MCF 10A (cell line): ENCODE measurements at regions of chr3 and their contacts with region 1.

Region 1: DNA sequence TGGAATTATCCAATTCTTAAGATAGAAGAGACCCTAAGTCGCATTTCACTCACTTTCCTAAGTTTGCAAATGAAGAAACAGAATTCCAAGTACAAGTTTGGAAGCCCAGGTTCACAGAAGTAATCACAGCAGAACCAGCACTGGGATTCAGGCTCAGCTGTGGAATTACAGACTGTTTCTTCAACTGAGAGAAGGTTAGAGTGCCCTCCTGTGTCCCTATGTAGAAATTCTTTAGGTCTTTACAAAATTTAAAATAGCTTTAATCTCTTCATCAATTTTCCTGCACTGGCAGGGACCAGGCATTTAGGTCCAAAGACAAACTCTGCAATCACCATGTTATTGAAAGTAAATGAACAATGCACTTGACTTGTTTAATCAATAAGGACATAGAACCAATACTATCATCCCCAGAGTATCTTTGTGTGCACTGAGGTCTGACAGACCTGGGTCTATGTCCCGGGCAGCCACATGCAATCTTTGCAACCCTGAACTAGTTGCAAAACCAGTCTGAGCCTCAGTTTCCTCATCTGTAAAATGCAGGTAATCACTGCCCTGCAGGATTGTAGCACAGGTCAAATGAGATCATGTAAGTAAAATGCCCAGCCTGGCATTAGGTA is 96.3 kb upstream of the ZBED2 start:
- DNase-seq: peak; percentile 51
- H3K4me3 Mint-ChIP-seq: no peak overlapping the region
- H3K27ac Mint-ChIP-seq: no peak overlapping the region
- H3K4me1 Mint-ChIP-seq: peaks cover 6% of the 10 kb centered on the region
- H3K27me3 Mint-ChIP-seq: no peaks in the 10 kb centered on the region
- CTCF ChIP-seq: peak; percentile 55

Region 2: GRCh38 chr3:111571907-111572460 is 119.4 kb before region 1 on chr3:
- CTCF ChIA-PET with region 1: interaction called, 193 read pairs
- POLR2A ChIA-PET with region 1: interaction called, 3 read pairs
- intact Hi-C with region 1: no loop called
- DNase-seq: no peak
- H3K4me3 Mint-ChIP-seq: no peak overlapping the region
- H3K27ac Mint-ChIP-seq: no peak overlapping the region
- H3K4me1 Mint-ChIP-seq: no peaks in the 10 kb centered on the region
- H3K27me3 Mint-ChIP-seq: no peaks in the 10 kb centered on the region
- CTCF ChIP-seq: no peak

Region 3: GRCh38 chr3:111616417-111617105 is 74.8 kb before region 1 on chr3:
- CTCF ChIA-PET with region 1: interaction called, 14 read pairs
- POLR2A ChIA-PET with region 1: no interaction called
- intact Hi-C with region 1: no loop called
- DNase-seq: peak; percentile 52
- H3K4me3 Mint-ChIP-seq: no peak overlapping the region
- H3K27ac Mint-ChIP-seq: no peak overlapping the region
- H3K4me1 Mint-ChIP-seq: peaks cover 24% of the 10 kb centered on the region
- H3K27me3 Mint-ChIP-seq: no peaks in the 10 kb centered on the region
- CTCF ChIP-seq: peak; percentile 8

Region 4: DNA sequence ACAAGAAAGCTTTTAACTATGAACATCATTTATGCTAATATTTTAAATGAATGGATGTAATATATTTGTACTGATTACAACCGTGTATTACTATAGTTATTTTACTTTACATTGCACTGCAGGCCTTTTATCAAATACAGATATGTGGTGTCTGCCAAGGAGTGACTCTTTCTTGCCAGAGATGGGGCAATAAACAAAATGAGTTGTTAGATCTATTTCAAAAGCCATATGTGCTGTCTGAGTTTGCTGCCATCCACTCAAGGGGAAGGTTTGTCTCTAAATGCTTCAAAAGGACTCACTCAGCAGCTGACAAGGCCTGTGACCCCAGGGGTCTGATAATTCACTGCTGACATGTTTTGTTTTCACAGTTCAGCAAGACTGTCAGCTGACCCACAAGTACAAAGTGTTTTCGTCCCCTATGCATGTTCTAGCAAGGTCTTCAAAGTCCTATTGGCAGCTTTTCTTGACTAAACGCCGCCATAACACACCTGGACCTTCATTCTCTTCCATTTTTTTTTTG is 55.0 kb before region 1 on chr3:
- CTCF ChIA-PET with region 1: interaction called, 11 read pairs
- POLR2A ChIA-PET with region 1: no interaction called
- intact Hi-C with region 1: no loop called
- DNase-seq: no peak
- H3K4me3 Mint-ChIP-seq: no peak overlapping the region
- H3K27ac Mint-ChIP-seq: no peak overlapping the region
- H3K4me1 Mint-ChIP-seq: no peaks in the 10 kb centered on the region
- H3K27me3 Mint-ChIP-seq: no peaks in the 10 kb centered on the region
- CTCF ChIP-seq: no peak

Region 5: DNA sequence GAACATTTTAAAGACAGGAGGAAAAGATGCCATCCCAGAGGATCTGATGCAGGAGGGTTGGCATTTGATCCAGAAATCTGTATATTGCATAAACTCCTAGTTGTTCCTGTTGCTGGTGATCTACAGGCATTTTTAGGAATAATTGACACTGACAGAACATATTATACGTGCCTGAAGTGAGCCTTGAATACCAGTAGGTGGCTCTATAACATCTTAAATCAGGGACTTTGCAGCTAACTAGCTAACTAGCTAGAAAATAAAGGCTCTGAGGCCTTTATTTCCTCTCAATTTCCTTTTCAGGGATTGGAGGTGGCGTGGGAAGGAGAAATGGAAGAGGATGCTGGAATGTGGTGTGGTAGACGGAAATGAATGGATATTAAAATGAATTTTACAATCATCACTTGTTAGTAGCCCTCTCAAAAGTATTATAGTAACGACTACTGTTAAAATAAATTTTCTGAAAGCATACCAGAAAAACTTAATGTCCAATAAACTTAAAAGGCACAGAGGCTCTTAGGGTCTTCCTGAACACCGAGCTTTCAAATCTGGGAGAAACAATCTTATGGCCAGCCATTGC is 22.4 kb before region 1 on chr3:
- CTCF ChIA-PET with region 1: interaction called, 5 read pairs
- POLR2A ChIA-PET with region 1: interaction called, 7 read pairs
- intact Hi-C with region 1: loop called (anchors 1 kb)
- DNase-seq: peak; percentile 61
- H3K4me3 Mint-ChIP-seq: no peak overlapping the region
- H3K27ac Mint-ChIP-seq: peak overlapping the region; percentile 10
- H3K4me1 Mint-ChIP-seq: peaks cover 33% of the 10 kb centered on the region
- H3K27me3 Mint-ChIP-seq: no peaks in the 10 kb centered on the region
- CTCF ChIP-seq: peak; percentile 71

Region 6: GRCh38 chr3:111712294-111713167 is 21.1 kb after region 1 on chr3:
- CTCF ChIA-PET with region 1: interaction called, 34 read pairs
- POLR2A ChIA-PET with region 1: interaction called, 4 read pairs
- intact Hi-C with region 1: no loop called
- DNase-seq: peak; percentile 68
- H3K4me3 Mint-ChIP-seq: no peak overlapping the region
- H3K27ac Mint-ChIP-seq: peak overlapping the region; percentile 62
- H3K4me1 Mint-ChIP-seq: peaks cover 20% of the 10 kb centered on the region
- H3K27me3 Mint-ChIP-seq: no peaks in the 10 kb centered on the region
- CTCF ChIP-seq: no peak

Region 7: GRCh38 chr3:111967651-111968274 is 276.4 kb after region 1 on chr3:
- CTCF ChIA-PET with region 1: interaction called, 12 read pairs
- POLR2A ChIA-PET with region 1: no interaction called
- intact Hi-C with region 1: no loop called
- DNase-seq: peak; percentile 86
- H3K4me3 Mint-ChIP-seq: no peak overlapping the region
- H3K27ac Mint-ChIP-seq: peak overlapping the region; percentile 5
- H3K4me1 Mint-ChIP-seq: peaks cover 11% of the 10 kb centered on the region
- H3K27me3 Mint-ChIP-seq: no peaks in the 10 kb centered on the region
- CTCF ChIP-seq: peak; percentile 86